ENCODE measurements at regions of chr7 and their contacts with region 1.

Region 1: GRCh38 chr7:130277763-130278643 is 11.3 kb downstream of the CPA2 start:
- DNase-seq: no peak
- H3K4me3 Mint-ChIP-seq: no peak overlapping the region
- H3K27ac Mint-ChIP-seq: peak overlapping the region; percentile 73
- H3K4me1 Mint-ChIP-seq: peaks cover 24% of the 10 kb centered on the region
- H3K27me3 Mint-ChIP-seq: peaks cover 2% of the 10 kb centered on the region

Region 2: DNA sequence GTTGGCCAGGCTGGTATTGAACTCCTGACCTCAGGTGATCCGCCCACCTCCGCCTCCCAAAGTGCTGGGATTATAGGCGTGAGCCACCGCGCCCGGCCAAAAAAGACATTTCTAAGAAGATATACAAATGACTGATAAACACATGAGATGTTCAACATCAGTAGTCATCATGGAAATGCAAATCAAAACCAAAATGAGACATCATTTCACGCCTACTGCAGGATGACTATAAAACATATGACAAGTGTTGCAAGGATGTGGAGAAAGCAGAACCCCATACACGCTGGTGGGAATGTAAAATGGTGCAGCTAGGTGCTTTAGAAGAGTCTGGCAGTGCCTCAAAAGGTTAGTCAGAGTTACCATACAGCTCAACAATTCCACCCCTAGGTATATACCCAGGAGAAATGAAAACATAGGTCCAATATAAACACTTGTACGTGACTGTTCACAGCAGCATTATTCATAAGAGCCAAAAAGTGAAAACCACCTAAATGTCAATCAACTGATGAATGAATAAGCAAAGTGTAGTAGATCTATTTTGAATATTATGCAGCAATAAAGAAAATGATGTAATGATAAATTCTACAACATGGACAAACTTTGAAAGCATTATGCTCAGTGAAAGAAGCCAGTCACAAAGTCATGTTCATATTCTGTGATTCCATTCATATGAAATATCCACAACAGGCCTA is 97.3 kb before region 1 on chr7:
- intact Hi-C with region 1: loop called (anchors 1 kb)
- DNase-seq: no peak
- H3K4me3 Mint-ChIP-seq: peak overlapping the region; percentile 15
- H3K27ac Mint-ChIP-seq: peak overlapping the region; percentile 92
- H3K4me1 Mint-ChIP-seq: peaks cover 36% of the 10 kb centered on the region
- H3K27me3 Mint-ChIP-seq: no peaks in the 10 kb centered on the region

Region 3: GRCh38 chr7:130365511-130366441 is 87.8 kb after region 1 on chr7:
- intact Hi-C with region 1: loop called (anchors 1 kb)
- DNase-seq: no peak
- H3K4me3 Mint-ChIP-seq: no peak overlapping the region
- H3K27ac Mint-ChIP-seq: no peak overlapping the region
- H3K4me1 Mint-ChIP-seq: peaks cover 33% of the 10 kb centered on the region
- H3K27me3 Mint-ChIP-seq: no peaks in the 10 kb centered on the region

Region 4: GRCh38 chr7:130566168-130566897 is 288.3 kb after region 1 on chr7:
- intact Hi-C with region 1: no loop called
- DNase-seq: no peak
- H3K4me3 Mint-ChIP-seq: no peak overlapping the region
- H3K27ac Mint-ChIP-seq: no peak overlapping the region
- H3K4me1 Mint-ChIP-seq: no peaks in the 10 kb centered on the region
- H3K27me3 Mint-ChIP-seq: no peaks in the 10 kb centered on the region